Activated CD4-positive, alpha-beta memory T cell treated with anti-CD3 and anti-CD28 coated beads for 36 hours (primary cell): ENCODE measurements at regions of chr2 and their contacts with region 1.

Region 1: GRCh38 chr2:109510136-109511028 is 103.4 kb downstream of the SEPTIN10 start:
- DNase-seq: peak; percentile 83
- H3K4me3 Mint-ChIP-seq: no peak overlapping the region
- H3K27ac Mint-ChIP-seq: no peak overlapping the region
- H3K4me1 Mint-ChIP-seq: peaks cover 15% of the 10 kb centered on the region
- H3K27me3 Mint-ChIP-seq: no peaks in the 10 kb centered on the region

Region 2: GRCh38 chr2:109128048-109128465 is 382.3 kb before region 1 on chr2:
- CTCF ChIA-PET with region 1: interaction called, 72 read pairs
- POLR2A ChIA-PET with region 1: no interaction called
- intact Hi-C with region 1: loop called (anchors 1 kb)
- DNase-seq: peak; percentile 74
- H3K4me3 Mint-ChIP-seq: peak overlapping the region; percentile 68
- H3K27ac Mint-ChIP-seq: no peak overlapping the region
- H3K4me1 Mint-ChIP-seq: peaks cover 11% of the 10 kb centered on the region
- H3K27me3 Mint-ChIP-seq: peaks cover 38% of the 10 kb centered on the region

Region 3: GRCh38 chr2:109499566-109499965 is 10.8 kb before region 1 on chr2:
- CTCF ChIA-PET with region 1: interaction called, 11 read pairs
- POLR2A ChIA-PET with region 1: no interaction called
- intact Hi-C with region 1: no loop called
- DNase-seq: no peak
- H3K4me3 Mint-ChIP-seq: no peak overlapping the region
- H3K27ac Mint-ChIP-seq: no peak overlapping the region
- H3K4me1 Mint-ChIP-seq: no peaks in the 10 kb centered on the region
- H3K27me3 Mint-ChIP-seq: peaks cover 1% of the 10 kb centered on the region